SK-MEL-5 (cell line): ENCODE measurements at regions of chr12 and their contacts with region 1.

Region 1: DNA sequence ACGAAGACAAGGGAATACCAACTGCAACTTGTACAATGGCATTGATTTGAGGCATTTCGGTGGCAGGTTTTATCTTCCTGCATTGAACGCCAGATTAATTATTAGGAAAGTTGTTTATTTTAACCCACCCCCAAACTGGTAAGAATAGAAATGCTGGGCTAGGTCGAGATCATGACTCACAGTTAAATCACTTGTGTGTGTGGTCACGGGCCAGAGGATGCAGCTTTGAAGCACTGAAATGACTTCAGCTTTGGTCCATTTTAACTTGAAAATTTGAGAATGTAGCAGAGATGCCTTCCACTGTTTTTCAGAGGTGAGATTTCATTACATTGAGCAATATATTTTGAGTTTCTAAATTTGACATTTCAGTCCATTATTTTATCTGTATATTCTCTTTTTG is 23.6 kb upstream of the KCNH3 start:
- DNase-seq: no peak

Region 2: DNA sequence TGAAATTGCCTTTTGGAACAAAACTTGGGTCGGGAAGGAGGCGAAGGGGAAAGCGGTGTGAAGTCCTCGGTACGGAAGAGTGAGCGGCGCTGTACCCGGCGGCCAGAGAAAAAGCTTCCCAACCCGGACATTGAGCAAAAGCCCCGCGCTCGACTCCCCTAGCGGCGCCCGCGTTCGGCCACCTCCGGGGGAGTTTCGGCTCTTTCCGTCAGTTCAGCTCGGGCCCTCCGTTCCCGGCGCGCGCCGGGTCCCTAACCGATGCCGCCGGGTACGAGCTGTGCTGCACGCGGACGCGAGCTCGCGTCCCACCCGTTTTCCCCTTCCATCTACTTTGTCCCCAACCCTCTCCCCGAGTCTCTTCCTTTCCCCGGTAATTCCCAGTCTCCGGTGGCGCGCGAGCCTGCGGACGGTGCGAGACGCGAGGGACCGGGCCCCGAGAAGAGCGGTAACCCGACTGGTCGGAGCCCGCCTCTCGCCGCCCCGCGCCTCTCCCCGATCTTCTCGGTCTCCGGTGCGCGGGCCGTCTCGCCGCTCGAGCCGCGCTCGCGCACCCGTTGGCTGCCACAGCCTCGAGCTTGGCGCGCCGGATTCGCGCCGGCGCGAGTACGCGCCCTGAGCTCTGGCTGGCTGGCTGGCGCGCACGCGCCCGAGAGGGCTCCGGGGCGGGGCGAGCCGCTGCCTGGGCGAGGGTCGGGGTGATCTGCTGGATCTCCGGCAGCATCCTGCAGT is 148.4 kb before region 1 on chr12:
- in situ Hi-C with region 1: loop called (anchors 10 kb)
- DNase-seq: peak; percentile 95

Region 3: GRCh38 chr12:49482095-49483051 is 32.9 kb before region 1 on chr12:
- in situ Hi-C with region 1: no loop called
- DNase-seq: no peak